Esophagus muscularis mucosa (tissue), 4 donors: ENCODE measurements at regions of chr15 and their contacts with region 1.

Region 1: GRCh38 chr15:66356345-66357236 is at the start of gene TIPIN:
- DNase-seq: peak; percentile 97
- H3K4me3 ChIP-seq: peak within 1 kb of the TSS; percentile 70 to 84 (median 70)
- H3K27ac ChIP-seq: peak within 1 kb of the TSS; percentile 81 to 88 (median 84)
- H3K4me1 ChIP-seq: peaks cover 4 to 15% (median 9%) of the 10 kb centered on the region in 4 donors
- H3K27me3 ChIP-seq: no peaks in the 10 kb centered on the region
- CTCF ChIP-seq: no peak
- EP300 ChIP-seq: no peak
- POLR2A ChIP-seq: no peak
- total RNA-seq, gene TIPIN: 2.9 to 5.3 (median 3.8) TPM

Region 2: DNA sequence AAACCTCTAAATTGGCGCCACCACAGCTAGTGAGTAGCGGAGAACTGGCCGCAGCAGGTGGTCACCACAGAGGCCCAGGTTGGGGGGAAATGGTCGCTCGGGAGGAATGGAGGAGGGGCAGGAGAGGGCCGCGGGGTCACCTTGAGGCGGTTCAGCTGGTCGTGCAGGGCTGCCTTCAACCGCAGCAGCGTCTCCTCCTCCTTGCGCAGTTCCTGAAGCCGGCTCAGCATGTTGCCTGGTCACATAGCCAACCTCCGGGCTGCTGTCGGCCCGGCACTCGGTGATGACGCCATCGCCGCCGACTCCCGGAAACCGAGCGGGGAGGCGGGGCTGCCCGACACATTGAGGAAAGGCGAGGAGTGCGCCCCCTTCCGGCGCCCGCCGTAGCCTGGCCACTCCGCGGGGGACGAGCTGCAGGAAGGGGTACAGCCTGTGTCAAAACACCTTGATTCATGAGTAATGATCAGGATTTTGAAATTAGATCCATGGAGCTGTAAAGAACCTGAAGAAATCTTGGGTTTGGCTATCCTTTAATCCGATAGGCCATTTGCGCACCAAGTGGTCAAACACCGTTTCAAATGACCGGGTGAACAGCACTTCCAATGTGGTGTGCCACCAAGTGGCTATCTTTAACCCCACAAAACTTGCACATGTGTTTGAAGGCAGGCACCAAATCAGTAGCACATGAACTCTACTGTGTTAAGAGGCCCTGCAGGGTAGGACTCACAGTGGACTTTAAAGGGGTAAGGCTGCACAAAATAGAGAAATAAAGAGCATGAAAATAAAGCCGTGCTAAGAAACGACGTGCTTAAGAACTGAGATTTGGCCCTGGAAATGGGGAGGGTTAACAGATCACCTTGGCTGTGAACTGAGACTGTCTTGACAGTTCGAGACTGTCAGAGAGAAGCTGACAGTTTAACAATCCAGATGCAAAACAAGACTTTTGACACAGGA is 141.2 kb after region 1 on chr15 and contains the start of gene SNAPC5:
- intact Hi-C with region 1: loop called (anchors 10 kb)
- DNase-seq: peak; percentile 99
- H3K4me3 ChIP-seq: peak within 1 kb of the TSS; percentile 62 to 93 (median 88)
- H3K27ac ChIP-seq: peak within 1 kb of the TSS; percentile 83 to 92 (median 87)
- H3K4me1 ChIP-seq: peaks cover 17 to 41% (median 31%) of the 10 kb centered on the region in 4 donors
- H3K27me3 ChIP-seq: no peaks in the 10 kb centered on the region
- CTCF ChIP-seq: peak; percentile 96 to 98 (median 97)
- EP300 ChIP-seq: no peak
- POLR2A ChIP-seq: peak; percentile 65
- total RNA-seq, gene SNAPC5: 23.3 to 44.9 (median 34.7) TPM

Region 3: GRCh38 chr15:66545249-66545648 is 188.7 kb after region 1 on chr15:
- intact Hi-C with region 1: no loop called
- DNase-seq: no peak
- H3K4me3 ChIP-seq: no peak overlapping the region
- H3K27ac ChIP-seq: no peak overlapping the region
- H3K4me1 ChIP-seq: no peaks in the 10 kb centered on the region
- H3K27me3 ChIP-seq: no peaks in the 10 kb centered on the region
- CTCF ChIP-seq: no peak
- EP300 ChIP-seq: no peak
- POLR2A ChIP-seq: no peak

Region 4: GRCh38 chr15:67150028-67150860 is 793.7 kb after region 1 on chr15:
- intact Hi-C with region 1: no loop called
- DNase-seq: no peak
- H3K4me3 ChIP-seq: peak overlapping the region in 3 of 4 donors; percentile 0 to 27 (median 11)
- H3K27ac ChIP-seq: peak overlapping the region; percentile 50 to 87 (median 85)
- H3K4me1 ChIP-seq: peaks cover 53 to 74% (median 71%) of the 10 kb centered on the region in 4 donors
- H3K27me3 ChIP-seq: no peaks in the 10 kb centered on the region
- CTCF ChIP-seq: no peak
- EP300 ChIP-seq: no peak
- POLR2A ChIP-seq: no peak

Region 5: DNA sequence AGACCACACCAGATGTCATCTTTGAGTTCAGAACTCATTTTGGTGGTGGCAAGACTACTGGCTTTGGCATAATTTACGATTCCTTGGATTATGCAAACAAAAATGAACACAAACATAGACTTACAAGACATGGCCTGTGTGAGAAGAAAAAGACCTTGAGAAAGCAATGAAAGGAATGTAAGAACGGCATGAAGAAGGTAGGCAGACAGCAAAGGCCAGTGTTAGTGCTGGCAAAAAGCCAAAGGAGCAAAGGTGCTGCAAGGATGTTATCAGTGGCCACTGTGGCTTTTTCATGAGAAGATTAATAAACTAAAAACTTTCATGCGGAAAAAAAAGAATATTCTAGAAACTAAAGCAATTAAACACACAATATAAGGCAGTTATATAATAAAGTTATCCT is 876.0 kb after region 1 on chr15:
- intact Hi-C with region 1: no loop called
- DNase-seq: no peak
- H3K4me3 ChIP-seq: no peak overlapping the region
- H3K27ac ChIP-seq: no peak overlapping the region
- H3K4me1 ChIP-seq: no peaks in the 10 kb centered on the region
- H3K27me3 ChIP-seq: no peaks in the 10 kb centered on the region
- CTCF ChIP-seq: no peak
- EP300 ChIP-seq: no peak
- POLR2A ChIP-seq: no peak